ENCODE measurements at regions of chr17 and their contacts with region 1.

Region 1: DNA sequence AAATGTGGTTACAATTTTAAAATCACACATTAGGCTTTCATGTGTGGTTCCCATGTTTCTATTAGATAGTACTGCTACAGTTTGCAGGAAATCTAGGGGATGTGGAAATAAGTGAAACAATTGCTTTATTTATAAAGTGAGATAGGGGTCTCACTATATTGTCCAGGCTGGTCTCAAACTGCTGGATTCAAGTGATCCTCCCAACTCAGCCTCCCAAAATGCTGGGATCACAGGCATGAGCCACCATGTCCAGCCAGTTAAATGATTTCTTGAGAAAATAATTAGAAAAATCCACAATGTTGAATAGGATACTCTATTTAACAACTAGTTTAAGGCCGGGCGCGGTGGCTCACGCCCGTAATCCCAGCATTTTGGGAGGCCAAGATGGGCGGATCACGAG is 42.0 kb downstream of the UBE2G1 start:
- DNase-seq: no peak
- H3K4me3 Mint-ChIP-seq: no peak overlapping the region
- H3K27ac Mint-ChIP-seq: no peak overlapping the region
- H3K4me1 Mint-ChIP-seq: peaks cover 33% of the 10 kb centered on the region
- H3K27me3 Mint-ChIP-seq: no peaks in the 10 kb centered on the region

Region 2: DNA sequence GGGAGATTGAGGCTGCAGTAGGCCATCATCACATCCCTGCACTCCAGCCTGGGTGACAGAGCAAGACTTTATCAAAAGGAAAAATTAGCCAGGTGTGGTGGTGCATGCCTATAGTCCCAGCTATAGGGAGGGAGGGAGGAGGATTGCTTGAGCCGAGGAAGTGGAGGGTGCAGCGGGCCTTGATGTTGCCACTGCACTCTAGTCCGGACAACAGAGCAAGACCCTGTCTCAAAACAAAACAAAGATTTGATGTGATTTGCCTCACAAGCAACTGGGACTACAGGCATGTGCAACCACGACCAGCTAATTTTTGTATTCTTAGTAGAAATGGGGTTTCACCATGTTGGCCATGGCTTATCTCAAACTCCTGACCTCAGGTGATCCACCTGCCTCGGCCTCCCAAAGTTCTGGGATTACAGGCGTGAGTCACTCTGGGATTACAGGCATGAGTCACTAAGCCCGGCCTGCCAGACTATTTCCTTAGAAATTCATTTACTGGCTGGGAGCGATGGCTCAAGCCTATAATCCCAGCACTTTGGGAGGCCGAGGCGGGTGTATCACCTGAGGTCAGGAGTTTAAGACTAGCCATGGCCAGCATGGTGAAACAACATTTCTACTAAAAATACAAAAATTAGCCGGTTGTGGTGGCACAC is 30.5 kb after region 1 on chr17:
- CTCF ChIA-PET with region 1: interaction called, 3 read pairs
- intact Hi-C with region 1: loop called (anchors 5 kb)
- DNase-seq: no peak
- H3K4me3 Mint-ChIP-seq: no peak overlapping the region
- H3K27ac Mint-ChIP-seq: no peak overlapping the region
- H3K4me1 Mint-ChIP-seq: peaks cover 41% of the 10 kb centered on the region
- H3K27me3 Mint-ChIP-seq: no peaks in the 10 kb centered on the region

Region 3: GRCh38 chr17:4433515-4434031 is 109.1 kb after region 1 on chr17 and contains the start of gene SPNS3:
- CTCF ChIA-PET with region 1: no interaction called
- intact Hi-C with region 1: no loop called
- DNase-seq: peak; percentile 64
- H3K4me3 Mint-ChIP-seq: peak within 1 kb of the TSS; percentile 74
- H3K27ac Mint-ChIP-seq: no peak within 1 kb of the TSS
- H3K4me1 Mint-ChIP-seq: peaks cover 25% of the 10 kb centered on the region
- H3K27me3 Mint-ChIP-seq: no peaks in the 10 kb centered on the region
- total RNA-seq, gene SPNS3: 17.7 to 20.4 TPM